Activated T-helper 1 cell treated with anti-CD3 and anti-CD28 coated beads, Interleukin-12 subunit alpha, Interleukin-12 subunit beta, Interleukin-2, Interleukin-4 antibody, amounts not matched to agents 30 ng/mL and 10 ng/mL and 1 ng/mL, durations not matched to agents 14 hours and 24 hours and 36 hours (primary cell): ENCODE measurements at regions of chr21 and their contacts with region 1.

Region 1: DNA sequence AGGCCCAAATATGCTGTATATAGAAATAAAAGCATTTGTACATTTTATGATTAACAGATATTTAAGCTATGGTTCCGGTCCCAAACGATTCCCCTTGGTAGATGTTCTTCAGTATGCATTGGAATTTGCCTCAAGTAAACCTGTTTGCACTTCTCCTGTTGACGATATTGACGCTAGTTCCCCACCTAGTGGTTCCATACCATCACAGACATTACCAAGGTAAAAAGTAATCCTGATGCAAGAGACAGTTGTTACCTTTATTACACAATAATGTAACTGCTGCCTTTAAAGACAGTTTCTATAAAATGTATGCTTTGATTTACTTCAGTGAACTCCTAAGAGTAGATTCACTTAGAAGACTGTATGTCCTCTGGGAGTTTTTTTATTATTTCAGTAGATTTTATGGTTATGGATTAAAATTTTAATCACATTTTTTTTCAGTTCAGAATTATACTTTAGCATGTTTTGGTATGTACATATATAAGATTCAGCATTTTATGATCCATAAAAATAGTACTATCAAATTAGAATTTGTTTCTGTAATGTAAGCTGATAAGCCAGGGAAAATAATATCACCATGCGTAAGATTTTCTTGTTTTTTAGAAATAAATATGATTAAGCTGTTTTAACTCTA is 96.5 kb downstream of the USP25 start:
- DNase-seq: peak; percentile 8
- H3K4me3 Mint-ChIP-seq: no peak overlapping the region
- H3K27ac Mint-ChIP-seq: peak overlapping the region; percentile 59
- H3K4me1 Mint-ChIP-seq: peaks cover 21% of the 10 kb centered on the region
- H3K27me3 Mint-ChIP-seq: no peaks in the 10 kb centered on the region

Region 2: DNA sequence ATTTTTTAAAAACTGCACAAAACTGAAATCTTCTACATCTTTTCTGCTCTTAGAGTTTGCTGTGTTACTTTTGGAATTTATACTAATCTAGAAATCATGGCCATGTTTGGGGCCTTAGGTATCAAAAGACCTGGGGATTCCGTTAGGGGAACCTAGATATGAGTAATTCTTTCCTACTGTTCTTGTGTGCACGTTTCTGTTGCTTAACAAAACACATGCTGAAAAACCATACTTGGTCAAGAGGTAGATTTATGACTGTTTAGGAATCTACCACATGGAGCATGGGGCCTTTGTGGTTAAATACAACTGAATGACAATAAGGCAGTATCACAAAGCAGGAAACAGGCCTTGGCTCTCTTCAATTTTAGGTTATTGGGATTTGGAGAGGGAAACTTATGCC is 388.4 kb before region 1 on chr21:
- intact Hi-C with region 1: no loop called
- DNase-seq: no peak
- H3K4me3 Mint-ChIP-seq: no peak overlapping the region
- H3K27ac Mint-ChIP-seq: peak overlapping the region; percentile 34
- H3K4me1 Mint-ChIP-seq: peaks cover 12% of the 10 kb centered on the region
- H3K27me3 Mint-ChIP-seq: no peaks in the 10 kb centered on the region

Region 3: DNA sequence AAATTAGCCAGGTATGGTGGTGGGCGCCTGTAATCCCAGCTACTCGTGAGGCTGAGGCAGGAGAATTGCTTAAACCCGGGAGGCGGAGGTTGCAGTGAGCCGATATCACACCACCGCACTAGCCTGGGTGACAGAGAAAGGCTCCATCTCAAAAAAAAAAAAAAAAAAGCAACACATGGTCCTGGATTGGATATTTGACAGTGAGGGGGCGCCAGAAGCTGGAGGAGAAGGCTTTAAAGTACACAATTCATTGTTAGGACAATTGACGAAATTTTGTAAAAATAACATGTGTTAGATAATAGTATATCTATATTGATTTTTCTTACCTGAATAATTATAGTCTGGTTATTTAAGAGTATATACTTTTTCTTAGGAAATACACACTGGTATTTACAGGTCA is 146.6 kb before region 1 on chr21:
- intact Hi-C with region 1: loop called (anchors 5 kb)
- DNase-seq: no peak
- H3K4me3 Mint-ChIP-seq: no peak overlapping the region
- H3K27ac Mint-ChIP-seq: no peak overlapping the region
- H3K4me1 Mint-ChIP-seq: peaks cover 6% of the 10 kb centered on the region
- H3K27me3 Mint-ChIP-seq: peaks cover 6% of the 10 kb centered on the region